ENCODE measurements at regions of chr14 and their contacts with region 1.

Region 1: GRCh38 chr14:49585803-49586672 is at the start of gene RPS29:
- DNase-seq: peak; percentile 99
- H3K4me3 Mint-ChIP-seq: peak within 1 kb of the TSS; percentile 87
- H3K27ac Mint-ChIP-seq: peak within 1 kb of the TSS; percentile 93
- H3K4me1 Mint-ChIP-seq: peaks cover 46% of the 10 kb centered on the region
- H3K27me3 Mint-ChIP-seq: peaks cover 4% of the 10 kb centered on the region
- total RNA-seq, gene RPS29: 2,029 to 2,157 TPM

Region 2: DNA sequence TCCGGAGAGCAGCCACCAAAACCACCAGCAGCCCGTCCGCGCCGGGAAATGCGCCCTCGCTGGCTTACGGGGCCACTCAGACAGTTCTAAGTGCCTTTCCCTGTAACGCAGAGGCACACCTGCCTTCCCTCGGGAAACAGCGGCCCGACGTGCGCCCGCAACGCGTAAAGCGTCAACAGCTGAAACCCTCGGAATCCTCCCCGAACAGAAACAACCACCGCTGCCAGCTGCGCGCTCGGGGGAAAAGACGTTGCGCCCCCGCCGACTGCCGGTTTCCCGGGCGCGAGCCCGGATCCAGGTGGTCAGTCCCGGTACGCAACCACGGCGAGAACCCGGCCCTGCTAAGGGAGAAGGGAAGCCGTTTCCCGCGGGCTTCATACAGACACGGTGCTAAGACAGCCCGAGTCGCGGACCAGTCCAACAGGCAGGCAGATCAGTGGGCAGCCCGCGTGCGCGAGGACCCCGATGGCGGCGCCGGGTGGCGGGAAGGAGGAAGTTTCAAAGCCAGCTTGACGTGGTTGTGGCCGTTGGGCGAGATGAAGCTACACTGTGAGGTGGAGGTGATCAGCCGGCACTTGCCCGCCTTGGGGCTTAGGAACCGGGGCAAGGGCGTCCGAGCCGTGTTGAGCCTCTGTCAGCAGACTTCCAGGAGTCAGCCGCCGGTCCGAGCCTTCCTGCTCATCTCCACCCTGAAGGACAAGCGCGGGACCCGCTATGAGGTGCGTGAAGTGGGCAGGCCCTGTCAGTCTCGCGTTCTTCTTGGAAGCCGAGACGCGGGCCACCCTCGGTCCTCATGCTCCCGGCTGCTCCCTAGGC is 12.7 kb after region 1 on chr14 and contains the start of gene LRR1:
- CTCF ChIA-PET with region 1: interaction called, 18 read pairs
- POLR2A ChIA-PET with region 1: interaction called, 44 read pairs
- intact Hi-C with region 1: loop called (anchors 1 kb)
- DNase-seq: peak; percentile 90
- H3K4me3 Mint-ChIP-seq: peak within 1 kb of the TSS; percentile 96
- H3K27ac Mint-ChIP-seq: peak within 1 kb of the TSS; percentile 97
- H3K4me1 Mint-ChIP-seq: peaks cover 18% of the 10 kb centered on the region
- H3K27me3 Mint-ChIP-seq: no peaks in the 10 kb centered on the region
- total RNA-seq, gene LRR1: 51.8 to 52.0 TPM

Region 3: GRCh38 chr14:49692811-49693734 is 107.0 kb after region 1 on chr14 and contains the start of gene KLHDC1:
- CTCF ChIA-PET with region 1: interaction called, 4 read pairs
- POLR2A ChIA-PET with region 1: no interaction called
- intact Hi-C with region 1: loop called (anchors 5 kb)
- DNase-seq: peak; percentile 86
- H3K4me3 Mint-ChIP-seq: peak within 1 kb of the TSS; percentile 77
- H3K27ac Mint-ChIP-seq: peak within 1 kb of the TSS; percentile 40
- H3K4me1 Mint-ChIP-seq: peaks cover 27% of the 10 kb centered on the region
- H3K27me3 Mint-ChIP-seq: no peaks in the 10 kb centered on the region
- total RNA-seq, gene KLHDC1: 1.4 to 1.9 TPM

Region 4: GRCh38 chr14:49703965-49704364 is 117.9 kb after region 1 on chr14:
- CTCF ChIA-PET with region 1: no interaction called
- POLR2A ChIA-PET with region 1: no interaction called
- intact Hi-C with region 1: no loop called
- DNase-seq: no peak
- H3K4me3 Mint-ChIP-seq: no peak overlapping the region
- H3K27ac Mint-ChIP-seq: no peak overlapping the region
- H3K4me1 Mint-ChIP-seq: no peaks in the 10 kb centered on the region
- H3K27me3 Mint-ChIP-seq: no peaks in the 10 kb centered on the region

Region 5: GRCh38 chr14:49732896-49733295 is 146.9 kb after region 1 on chr14:
- CTCF ChIA-PET with region 1: no interaction called
- POLR2A ChIA-PET with region 1: no interaction called
- intact Hi-C with region 1: no loop called
- DNase-seq: no peak
- H3K4me3 Mint-ChIP-seq: no peak overlapping the region
- H3K27ac Mint-ChIP-seq: no peak overlapping the region
- H3K4me1 Mint-ChIP-seq: no peaks in the 10 kb centered on the region
- H3K27me3 Mint-ChIP-seq: no peaks in the 10 kb centered on the region

Region 6: GRCh38 chr14:50116181-50116956 is 530.3 kb after region 1 on chr14 and contains the start of gene VCPKMT:
- CTCF ChIA-PET with region 1: no interaction called
- POLR2A ChIA-PET with region 1: no interaction called
- intact Hi-C with region 1: loop called (anchors 1 kb)
- DNase-seq: peak; percentile 96
- H3K4me3 Mint-ChIP-seq: peak within 1 kb of the TSS; percentile 98
- H3K27ac Mint-ChIP-seq: peak within 1 kb of the TSS; percentile 95
- H3K4me1 Mint-ChIP-seq: peaks cover 37% of the 10 kb centered on the region
- H3K27me3 Mint-ChIP-seq: no peaks in the 10 kb centered on the region
- total RNA-seq, gene VCPKMT: 7.7 to 10.1 TPM

Region 7: GRCh38 chr14:50311975-50312733 is 726.1 kb after region 1 on chr14 and contains the starts of genes DMAC2L and L2HGDH:
- CTCF ChIA-PET with region 1: no interaction called
- POLR2A ChIA-PET with region 1: no interaction called
- intact Hi-C with region 1: loop called (anchors 5 kb)
- DNase-seq: peak; percentile 93
- H3K4me3 Mint-ChIP-seq: peak within 1 kb of the TSS; percentile 96
- H3K27ac Mint-ChIP-seq: peak within 1 kb of the TSS; percentile 94
- H3K4me1 Mint-ChIP-seq: peaks cover 37% of the 10 kb centered on the region
- H3K27me3 Mint-ChIP-seq: no peaks in the 10 kb centered on the region
- total RNA-seq, gene DMAC2L: 13.4 to 13.9 TPM
- total RNA-seq, gene L2HGDH: 15.0 to 15.2 TPM